ENCODE measurements at regions of chr9 and their contacts with region 1.

Region 1: DNA sequence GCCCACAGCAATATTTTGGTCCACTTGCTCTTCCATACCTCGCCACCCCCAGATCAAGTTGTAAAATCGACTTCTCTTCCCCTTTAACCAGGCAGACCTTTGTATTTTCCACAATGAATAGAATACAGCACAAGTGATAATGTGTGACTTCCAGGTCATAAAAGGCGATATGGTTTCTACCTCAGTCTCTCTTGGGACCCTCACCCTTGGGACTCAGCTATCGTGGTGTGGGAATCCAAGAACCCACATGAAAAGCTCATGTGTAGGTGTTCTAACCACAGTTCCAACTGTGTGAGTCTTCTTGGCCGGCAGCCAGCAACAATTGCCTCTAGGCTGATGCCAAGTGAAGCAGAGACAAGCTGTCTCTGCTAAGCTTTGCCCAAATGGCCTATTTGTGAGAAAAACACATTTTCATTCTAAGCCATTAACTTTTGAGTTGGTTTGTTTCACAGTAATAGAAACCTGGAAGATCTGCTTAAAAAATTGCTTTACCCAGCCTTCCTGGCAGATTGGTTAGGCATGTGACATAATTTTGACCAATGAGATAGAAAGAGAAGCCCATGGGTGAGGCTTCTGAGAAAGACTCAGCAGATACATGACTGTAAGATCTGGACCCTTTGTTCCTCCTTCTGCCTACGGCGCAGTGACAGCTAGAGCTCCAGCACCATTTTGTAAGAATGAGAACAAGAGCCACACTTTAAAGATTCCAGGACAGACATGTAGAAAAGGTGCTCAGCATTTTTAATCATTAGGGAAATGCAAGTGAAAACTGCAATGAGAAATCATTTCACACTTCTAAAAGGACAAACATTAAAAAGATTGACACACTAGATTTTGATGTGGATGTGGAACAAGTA is 18.3 kb upstream of the MLLT3 start:
- DNase-seq: peak; percentile 99
- ATAC-seq: peak; percentile 96
- H3K4me3 ChIP-seq: no peak overlapping the region
- H3K27ac ChIP-seq: peak overlapping the region; percentile 73
- H3K4me1 ChIP-seq: peaks cover 13% of the 10 kb centered on the region
- H3K27me3 ChIP-seq: no peaks in the 10 kb centered on the region
- CTCF ChIP-seq: no peak
- EP300 ChIP-seq: peak; percentile 67 to 90; a peak in 3 of 4 replicates
- POLR2A ChIP-seq: peak; percentile 46; the same call in 1 of the 2 replicates
- RAD21 ChIP-seq: peak; percentile 11; the same call in 1 of the 2 replicates

Region 2: DNA sequence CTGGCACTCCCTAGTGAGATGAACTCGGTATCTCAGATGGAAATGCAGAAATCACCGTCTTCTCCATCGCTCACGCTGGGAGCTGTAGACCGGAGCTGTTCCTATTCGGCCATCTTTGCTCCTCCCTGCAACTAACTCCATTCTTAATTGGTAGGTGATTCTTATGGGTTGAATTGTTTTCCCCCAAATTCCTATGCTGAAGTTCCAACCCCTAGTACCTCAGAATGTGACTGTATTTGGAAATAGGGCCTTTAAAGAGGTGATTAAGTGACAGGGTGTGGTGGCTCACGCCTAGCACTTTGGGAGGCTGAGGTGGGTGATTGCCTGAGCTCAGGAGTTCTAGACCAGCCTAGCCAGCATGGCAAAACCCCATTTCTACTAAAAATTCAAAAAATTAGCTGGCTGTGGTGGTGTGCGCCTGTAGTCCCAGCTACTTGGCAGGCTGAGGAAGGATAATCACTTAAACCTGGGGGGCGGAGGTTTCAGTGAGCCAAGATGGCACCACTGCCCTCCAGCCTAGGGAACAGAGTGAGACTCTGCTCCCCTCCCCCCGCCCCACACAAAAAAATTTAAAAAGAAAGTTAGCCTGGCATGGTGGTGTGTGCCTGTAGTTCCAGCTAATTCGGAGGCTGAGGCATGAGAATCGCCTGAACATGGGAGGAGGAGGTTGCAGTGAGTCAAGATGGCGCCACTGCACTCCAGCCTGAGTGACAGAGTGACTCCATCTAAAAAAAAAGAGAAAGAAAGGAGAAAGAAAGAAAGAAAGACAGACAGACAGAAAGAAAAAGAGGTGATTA is 18.3 kb after region 1 on chr9:
- CTCF ChIA-PET with region 1: interaction called, 18 read pairs
- POLR2A ChIA-PET with region 1: interaction called, 165 read pairs
- RAD21 ChIA-PET with region 1: interaction called, 176 read pairs
- SMC1A ChIA-PET with region 1: interaction called, 199 read pairs
- in situ Hi-C with region 1: no loop called
- intact Hi-C with region 1: loop called (anchors 1 kb)
- DNase-seq: no peak
- ATAC-seq: peak; percentile 56
- H3K4me3 ChIP-seq: peak overlapping the region; percentile 76
- H3K27ac ChIP-seq: peak overlapping the region; percentile 88
- H3K4me1 ChIP-seq: no peaks in the 10 kb centered on the region
- H3K27me3 ChIP-seq: no peaks in the 10 kb centered on the region
- CTCF ChIP-seq: no peak
- EP300 ChIP-seq: no peak
- POLR2A ChIP-seq: no peak
- RAD21 ChIP-seq: no peak

Region 3: DNA sequence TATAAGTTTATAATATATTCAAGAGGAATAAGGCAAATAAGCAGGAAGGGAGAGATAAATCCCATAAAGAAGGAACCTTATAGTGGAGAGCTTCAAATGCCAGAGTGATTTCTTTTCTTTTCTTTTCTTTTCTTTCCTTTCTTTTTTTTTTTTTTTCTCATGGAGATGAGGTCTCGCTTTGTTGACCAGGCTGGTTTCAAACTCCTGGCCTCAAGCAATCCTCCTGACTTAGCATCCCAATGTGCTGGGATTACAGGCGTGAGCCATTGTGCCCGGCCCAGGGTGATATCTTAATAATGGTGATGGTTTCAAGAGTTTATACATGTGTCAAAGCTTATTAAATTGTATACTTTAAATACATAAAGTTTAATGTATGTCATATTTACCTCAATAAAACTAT is 23.9 kb after region 1 on chr9:
- CTCF ChIA-PET with region 1: interaction called, 18 read pairs
- POLR2A ChIA-PET with region 1: interaction called, 165 read pairs
- RAD21 ChIA-PET with region 1: interaction called, 176 read pairs
- SMC1A ChIA-PET with region 1: interaction called, 199 read pairs
- in situ Hi-C with region 1: no loop called
- intact Hi-C with region 1: loop called (anchors 1 kb)
- DNase-seq: no peak
- ATAC-seq: no peak
- H3K4me3 ChIP-seq: no peak overlapping the region
- H3K27ac ChIP-seq: no peak overlapping the region
- H3K4me1 ChIP-seq: no peaks in the 10 kb centered on the region
- H3K27me3 ChIP-seq: no peaks in the 10 kb centered on the region
- CTCF ChIP-seq: no peak
- EP300 ChIP-seq: no peak
- POLR2A ChIP-seq: no peak
- RAD21 ChIP-seq: no peak

Region 4: DNA sequence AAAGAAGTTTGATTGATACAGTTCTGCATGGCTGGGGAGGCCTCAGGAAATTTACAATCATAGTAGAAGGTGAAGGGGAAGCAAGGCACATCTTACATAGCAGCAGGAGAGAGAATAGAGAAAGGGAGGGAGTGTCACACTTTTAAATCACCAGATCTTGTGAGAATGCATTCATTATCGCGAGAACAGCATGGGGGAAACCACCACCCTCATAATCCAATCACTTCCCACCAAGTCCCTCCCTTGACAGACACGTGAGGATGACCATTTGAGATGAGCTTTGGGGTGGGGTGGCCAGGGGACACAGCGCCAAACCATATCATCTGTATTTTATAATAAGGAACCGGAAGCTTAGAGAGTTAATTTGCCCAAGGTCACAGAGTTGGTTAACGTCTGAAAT is 29.8 kb after region 1 on chr9:
- CTCF ChIA-PET with region 1: no interaction called
- POLR2A ChIA-PET with region 1: interaction called, 165 read pairs
- RAD21 ChIA-PET with region 1: interaction called, 20 read pairs
- SMC1A ChIA-PET with region 1: interaction called, 38 read pairs
- in situ Hi-C with region 1: no loop called
- intact Hi-C with region 1: no loop called
- DNase-seq: no peak
- ATAC-seq: no peak; the same call in 2 of the 3 replicates
- H3K4me3 ChIP-seq: no peak overlapping the region
- H3K27ac ChIP-seq: no peak overlapping the region
- H3K4me1 ChIP-seq: no peaks in the 10 kb centered on the region
- H3K27me3 ChIP-seq: no peaks in the 10 kb centered on the region
- CTCF ChIP-seq: no peak
- EP300 ChIP-seq: no peak
- POLR2A ChIP-seq: no peak
- RAD21 ChIP-seq: no peak